AG04449 (cell line): ENCODE measurements at regions of chr3 and their contacts with region 1.

Region 1: GRCh38 chr3:3170998-3171397 is 8.5 kb downstream of the CRBN start:
- DNase-seq: no peak
- H3K4me3 ChIP-seq: no peak overlapping the region
- CTCF ChIP-seq: peak; percentile 32

Region 2: DNA sequence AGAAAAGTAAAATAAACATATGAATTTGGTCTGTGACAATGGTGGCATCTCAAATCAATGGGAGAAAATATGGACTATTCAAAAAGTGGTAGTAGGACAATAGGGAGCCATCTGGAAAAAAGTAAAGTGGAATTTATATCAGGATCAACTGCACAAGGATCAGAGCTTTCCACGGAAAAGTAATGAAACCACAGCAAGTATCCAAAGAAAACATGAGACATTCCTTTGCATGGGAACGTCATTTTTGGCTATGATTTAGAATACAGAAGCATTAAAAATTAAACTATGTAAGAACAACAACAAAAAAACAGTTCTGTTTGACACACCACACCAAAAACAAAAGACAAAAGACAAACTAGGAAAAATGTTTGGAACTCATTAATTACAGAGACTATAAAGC is 10.2 kb before region 1 on chr3:
- CTCF ChIA-PET with region 1: interaction called, 80 read pairs
- POLR2A ChIA-PET with region 1: no interaction called
- DNase-seq: no peak
- H3K4me3 ChIP-seq: no peak overlapping the region
- CTCF ChIP-seq: no peak